GM10248 (cell line): ENCODE measurements at regions of chr20 and their contacts with region 1.

Region 1: GRCh38 chr20:38531021-38531420 is 50.0 kb upstream of the ADIG start:
- DNase-seq: no peak
- CTCF ChIP-seq: no peak

Region 2: DNA sequence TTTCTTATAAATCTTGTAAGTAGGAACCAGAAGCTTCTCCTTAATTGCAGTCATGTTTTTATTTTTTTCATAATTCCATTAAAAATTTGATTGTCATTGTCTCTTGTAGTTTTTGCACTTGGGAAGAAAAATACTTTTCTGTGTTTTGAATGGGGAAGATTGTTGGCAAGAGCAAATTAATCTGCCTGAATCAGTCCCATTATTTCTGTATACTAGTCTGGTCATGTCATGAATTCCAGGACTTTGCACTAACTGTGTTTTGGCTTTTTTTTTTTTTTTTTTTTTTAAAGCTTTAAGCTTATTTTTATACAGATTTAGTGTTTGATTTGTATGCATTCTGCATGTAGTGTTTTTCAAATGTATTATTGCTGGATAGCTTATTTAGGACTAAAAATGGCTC is 10.8 kb before region 1 on chr20:
- CTCF ChIA-PET with region 1: interaction called, 11 read pairs
- POLR2A ChIA-PET with region 1: no interaction called
- DNase-seq: no peak
- CTCF ChIP-seq: no peak

Region 3: DNA sequence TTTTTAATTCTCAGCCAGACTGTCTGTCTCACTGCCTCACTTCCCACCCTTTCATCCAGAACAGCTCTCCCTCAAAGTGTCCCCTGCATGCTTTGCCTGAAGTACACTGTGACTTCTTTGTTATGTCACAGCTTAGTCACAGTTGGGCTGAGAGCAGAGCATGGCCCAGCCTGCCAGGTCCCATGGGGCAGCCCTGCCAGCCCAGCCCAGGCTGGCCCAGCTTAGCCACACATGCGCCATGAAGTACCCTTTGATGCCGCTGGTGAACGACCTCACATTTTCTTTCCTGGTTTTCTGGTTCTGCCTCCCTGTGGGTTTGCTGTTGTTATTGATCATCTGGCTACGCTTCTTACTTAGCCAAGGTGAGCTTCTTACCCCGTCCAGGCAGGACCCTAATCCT is 50.0 kb after region 1 on chr20 and contains the start of gene ADIG:
- CTCF ChIA-PET with region 1: no interaction called
- POLR2A ChIA-PET with region 1: no interaction called
- DNase-seq: no peak
- CTCF ChIP-seq: no peak